ENCODE measurements at regions of chr5 and their contacts with region 1.

Region 1: GRCh38 chr5:86617756-86618576 is at the start of gene COX7C:
- DNase-seq: peak; percentile 87
- H3K4me3 ChIP-seq: peak within 1 kb of the TSS; percentile 88 to 99 (median 99)
- H3K27ac ChIP-seq: peak within 1 kb of the TSS; percentile 97
- H3K4me1 ChIP-seq: peaks cover 0 to 13% (median 0%) of the 10 kb centered on the region in 4 experiments; a peak in 1 of 7 replicates
- H3K27me3 ChIP-seq: no peaks in the 10 kb centered on the region
- CTCF ChIP-seq: peak in 1 of 3 experiments; percentile 3; a peak in 1 of 4 replicates
- EP300 ChIP-seq: 0 out of 3 replicates have a peak, but pooled peaks of 1 of the 2 experiments have one; percentile 55
- POLR2A ChIP-seq: peak; percentile 69 to 94
- RAD21 ChIP-seq: no peak
- total RNA-seq, gene COX7C: 1,035 and 1,059 TPM in 2 replicates

Region 2: GRCh38 chr5:86572825-86573517 is 45.0 kb before region 1 on chr5:
- CTCF ChIA-PET with region 1: no interaction called
- POLR2A ChIA-PET with region 1: no interaction called
- DNase-seq: no peak
- H3K4me3 ChIP-seq: no peak overlapping the region
- H3K27ac ChIP-seq: no peak overlapping the region
- H3K4me1 ChIP-seq: no peaks in the 10 kb centered on the region
- H3K27me3 ChIP-seq: no peaks in the 10 kb centered on the region
- CTCF ChIP-seq: no peak
- EP300 ChIP-seq: no peak
- POLR2A ChIP-seq: no peak
- RAD21 ChIP-seq: no peak

Region 3: DNA sequence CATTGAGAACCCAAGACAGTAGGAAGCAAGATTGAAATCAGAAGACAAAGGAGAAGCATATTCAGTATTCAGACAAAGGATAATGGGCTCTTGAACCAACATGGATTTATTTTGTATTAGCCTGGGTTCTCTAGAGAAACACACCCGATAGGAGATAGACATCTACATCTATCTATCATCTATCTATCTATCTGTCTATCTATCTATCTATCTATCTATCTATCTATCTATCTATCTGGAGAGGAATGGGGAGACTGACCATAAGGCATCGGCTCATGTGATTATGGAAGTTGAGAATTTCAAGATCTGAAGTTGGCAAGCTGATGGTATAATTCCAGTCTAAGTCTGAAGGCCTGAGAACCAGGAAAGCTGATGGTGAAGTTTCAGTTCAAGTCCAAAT is 13.2 kb after region 1 on chr5:
- CTCF ChIA-PET with region 1: no interaction called
- POLR2A ChIA-PET with region 1: interaction called, 138 read pairs
- DNase-seq: no peak
- H3K4me3 ChIP-seq: no peak overlapping the region
- H3K27ac ChIP-seq: no peak overlapping the region
- H3K4me1 ChIP-seq: peaks cover 0 to 3% (median 0%) of the 10 kb centered on the region in 4 experiments; a peak in 1 of 7 replicates
- H3K27me3 ChIP-seq: no peaks in the 10 kb centered on the region
- CTCF ChIP-seq: no peak
- EP300 ChIP-seq: no peak
- POLR2A ChIP-seq: no peak
- RAD21 ChIP-seq: no peak

Region 4: DNA sequence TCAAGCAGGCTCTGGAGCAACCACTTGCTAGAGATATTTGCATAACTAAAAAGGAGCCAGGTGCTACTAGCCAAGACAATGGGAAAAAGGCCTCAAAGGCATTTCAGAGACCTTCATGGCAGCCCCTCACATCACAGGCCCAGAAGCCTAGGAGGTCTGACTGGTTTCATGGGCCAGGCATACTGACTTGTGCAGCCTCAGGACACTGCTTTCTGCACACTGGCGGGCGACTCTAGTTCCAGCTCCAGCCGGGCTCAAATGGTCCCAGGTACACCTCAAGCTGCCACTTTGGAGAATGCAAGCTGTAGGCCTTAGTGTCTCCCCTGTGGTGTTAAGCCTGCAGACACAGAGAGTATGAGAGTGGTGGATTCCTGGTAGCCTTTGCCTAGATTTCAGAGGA is 26.9 kb after region 1 on chr5:
- CTCF ChIA-PET with region 1: no interaction called
- POLR2A ChIA-PET with region 1: interaction called, 138 read pairs
- DNase-seq: peak in 1 of 2 experiments; percentile 64
- H3K4me3 ChIP-seq: peak overlapping the region in 1 of 4 experiments; percentile 24; a peak in 1 of 8 replicates
- H3K27ac ChIP-seq: peak overlapping the region; percentile 74
- H3K4me1 ChIP-seq: peaks cover 4 to 29% (median 16%) of the 10 kb centered on the region in 4 experiments
- H3K27me3 ChIP-seq: no peaks in the 10 kb centered on the region
- CTCF ChIP-seq: no peak
- EP300 ChIP-seq: no peak
- POLR2A ChIP-seq: peak in 1 of 2 experiments; percentile 47; a peak in 1 of 3 replicates
- RAD21 ChIP-seq: peak in 1 of 2 experiments; percentile 2; a peak in 1 of 4 replicates